Activated naive CD4-positive, alpha-beta T cell treated with anti-CD3 and anti-CD28 coated beads for 36 hours (primary cell): ENCODE measurements at regions of chr3 and their contacts with region 1.

Region 1: GRCh38 chr3:169966428-169966950 is at the start of gene SEC62:
- DNase-seq: peak; percentile 97
- H3K4me3 Mint-ChIP-seq: peak within 1 kb of the TSS; percentile 96
- H3K27ac Mint-ChIP-seq: peak within 1 kb of the TSS; percentile 97
- H3K4me1 Mint-ChIP-seq: peaks cover 63% of the 10 kb centered on the region
- H3K27me3 Mint-ChIP-seq: no peaks in the 10 kb centered on the region
- total RNA-seq, gene SEC62: 60.0 to 73.3 TPM

Region 2: DNA sequence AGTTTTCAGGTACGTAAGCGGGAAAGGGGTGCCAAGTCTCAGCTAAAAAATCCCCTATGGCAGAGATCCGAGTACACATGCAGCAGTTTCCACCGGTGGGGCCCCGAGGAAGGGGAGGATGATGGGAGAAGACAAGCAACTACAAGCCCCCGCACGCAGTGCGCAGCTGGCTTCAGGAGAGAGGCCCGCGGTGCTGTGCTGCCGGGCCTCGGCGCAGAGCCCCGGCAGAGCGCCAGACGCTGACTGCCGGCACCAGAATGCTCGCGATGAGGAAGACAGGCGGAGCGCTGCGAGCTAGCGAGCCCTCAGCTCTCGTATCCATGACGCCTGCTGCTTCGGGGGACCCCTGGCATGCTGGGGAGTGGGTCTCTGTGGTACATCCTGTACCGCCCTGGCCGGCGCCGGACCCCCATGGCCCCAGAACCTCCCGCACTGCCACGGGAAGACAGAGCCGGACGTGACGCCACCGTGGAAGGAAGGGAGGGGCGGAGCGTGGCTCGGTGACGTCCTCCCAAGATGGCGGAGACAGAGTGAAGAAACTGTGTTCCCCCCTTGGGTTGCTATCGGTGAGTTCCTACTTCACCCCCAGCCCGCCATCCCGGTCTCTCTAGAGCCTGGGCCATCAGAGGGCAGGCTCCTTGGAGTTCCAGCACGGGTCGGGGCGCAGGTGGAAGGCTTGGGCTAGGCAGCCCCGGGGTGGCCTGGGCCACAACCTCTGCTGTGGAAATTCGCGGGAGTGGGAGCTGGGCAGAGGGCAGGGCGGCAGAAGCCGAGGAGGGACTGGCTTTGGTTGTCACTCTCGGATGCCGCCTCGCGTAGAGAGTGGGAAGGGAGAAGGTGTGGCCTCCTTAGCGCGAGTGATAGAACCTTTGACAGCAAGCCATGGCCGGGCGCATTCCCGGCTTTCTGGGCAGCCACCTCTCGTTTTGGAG is 193.3 kb before region 1 on chr3 and contains the start of gene MYNN:
- CTCF ChIA-PET with region 1: interaction called, 3 read pairs
- intact Hi-C with region 1: loop called (anchors 1 kb)
- DNase-seq: peak; percentile 94
- H3K4me3 Mint-ChIP-seq: peak within 1 kb of the TSS; percentile 94
- H3K27ac Mint-ChIP-seq: peak within 1 kb of the TSS; percentile 97
- H3K4me1 Mint-ChIP-seq: peaks cover 36% of the 10 kb centered on the region
- H3K27me3 Mint-ChIP-seq: no peaks in the 10 kb centered on the region
- total RNA-seq, gene MYNN: 12.0 to 13.5 TPM

Region 3: DNA sequence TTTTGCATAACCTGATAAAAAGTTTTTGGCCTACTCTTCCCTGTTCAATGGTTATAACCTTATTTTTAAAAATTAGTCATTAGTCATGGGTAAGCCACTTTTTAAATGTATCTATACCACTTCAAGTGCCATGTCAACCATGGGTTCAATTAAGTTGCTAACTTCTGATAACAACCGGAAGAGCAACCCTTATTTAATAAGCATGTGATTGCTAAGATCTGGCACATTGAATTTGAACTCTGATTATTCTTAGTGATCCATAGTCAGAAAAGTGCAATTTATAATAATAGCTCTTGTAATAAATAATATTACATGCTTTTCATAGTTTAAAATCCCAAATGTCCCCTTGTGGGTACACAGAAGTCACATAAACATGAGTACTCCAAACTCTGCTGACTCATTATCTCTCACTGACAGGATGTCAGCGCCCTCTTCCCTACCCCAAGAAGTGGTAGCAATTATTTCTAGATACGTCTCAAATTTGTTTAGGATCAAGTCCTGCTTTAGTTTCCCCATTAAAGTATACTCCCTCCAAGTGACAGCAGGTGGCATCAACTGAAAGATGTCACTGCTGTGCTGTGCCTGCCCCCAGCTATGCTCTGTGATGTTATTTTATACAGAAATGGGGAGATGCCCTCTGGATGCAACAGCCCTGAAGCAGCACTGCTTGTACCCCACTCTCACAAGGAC is 36.5 kb before region 1 on chr3:
- CTCF ChIA-PET with region 1: interaction called, 3 read pairs
- intact Hi-C with region 1: loop called (anchors 1 kb)
- DNase-seq: peak; percentile 50
- H3K4me3 Mint-ChIP-seq: no peak overlapping the region
- H3K27ac Mint-ChIP-seq: no peak overlapping the region
- H3K4me1 Mint-ChIP-seq: peaks cover 4% of the 10 kb centered on the region
- H3K27me3 Mint-ChIP-seq: no peaks in the 10 kb centered on the region

Region 4: GRCh38 chr3:169998568-169999131 is 32.2 kb after region 1 on chr3:
- CTCF ChIA-PET with region 1: interaction called, 5 read pairs
- intact Hi-C with region 1: loop called (anchors 1 kb)
- DNase-seq: no peak
- H3K4me3 Mint-ChIP-seq: no peak overlapping the region
- H3K27ac Mint-ChIP-seq: peak overlapping the region; percentile 83
- H3K4me1 Mint-ChIP-seq: peaks cover 40% of the 10 kb centered on the region
- H3K27me3 Mint-ChIP-seq: no peaks in the 10 kb centered on the region

Region 5: GRCh38 chr3:170037463-170038433 is 71.3 kb after region 1 on chr3 and contains the start of gene GPR160:
- CTCF ChIA-PET with region 1: interaction called, 4 read pairs
- intact Hi-C with region 1: loop called (anchors 2 kb)
- DNase-seq: peak; percentile 89
- H3K4me3 Mint-ChIP-seq: peak within 1 kb of the TSS; percentile 84
- H3K27ac Mint-ChIP-seq: no peak within 1 kb of the TSS
- H3K4me1 Mint-ChIP-seq: peaks cover 24% of the 10 kb centered on the region
- H3K27me3 Mint-ChIP-seq: no peaks in the 10 kb centered on the region
- total RNA-seq, gene GPR160: 10.3 TPM

Region 6: GRCh38 chr3:170357176-170357919 is 390.9 kb after region 1 on chr3 and contains the start of gene SKIL:
- CTCF ChIA-PET with region 1: interaction called, 3 read pairs
- intact Hi-C with region 1: loop called (anchors 5 kb)
- DNase-seq: peak; percentile 97
- H3K4me3 Mint-ChIP-seq: peak within 1 kb of the TSS; percentile 96
- H3K27ac Mint-ChIP-seq: peak within 1 kb of the TSS; percentile 95
- H3K4me1 Mint-ChIP-seq: peaks cover 32% of the 10 kb centered on the region
- H3K27me3 Mint-ChIP-seq: no peaks in the 10 kb centered on the region
- total RNA-seq, gene SKIL: 16.3 to 17.5 TPM